PC-9 (cell line): ENCODE measurements at regions of chr2 and their contacts with region 1.

Region 1: GRCh38 chr2:130372055-130372832 is 16.4 kb downstream of the PTPN18 start:
- DNase-seq: peak; percentile 70 to 93
- H3K4me3 ChIP-seq: peak overlapping the region; percentile 94
- H3K27ac ChIP-seq: no peak overlapping the region
- H3K4me1 ChIP-seq: 0 out of 2 replicates have a peak, but pooled peaks cover 9% of the 10 kb centered on the region
- H3K27me3 ChIP-seq: no peaks in the 10 kb centered on the region
- CTCF ChIP-seq: peak; percentile 91

Region 2: DNA sequence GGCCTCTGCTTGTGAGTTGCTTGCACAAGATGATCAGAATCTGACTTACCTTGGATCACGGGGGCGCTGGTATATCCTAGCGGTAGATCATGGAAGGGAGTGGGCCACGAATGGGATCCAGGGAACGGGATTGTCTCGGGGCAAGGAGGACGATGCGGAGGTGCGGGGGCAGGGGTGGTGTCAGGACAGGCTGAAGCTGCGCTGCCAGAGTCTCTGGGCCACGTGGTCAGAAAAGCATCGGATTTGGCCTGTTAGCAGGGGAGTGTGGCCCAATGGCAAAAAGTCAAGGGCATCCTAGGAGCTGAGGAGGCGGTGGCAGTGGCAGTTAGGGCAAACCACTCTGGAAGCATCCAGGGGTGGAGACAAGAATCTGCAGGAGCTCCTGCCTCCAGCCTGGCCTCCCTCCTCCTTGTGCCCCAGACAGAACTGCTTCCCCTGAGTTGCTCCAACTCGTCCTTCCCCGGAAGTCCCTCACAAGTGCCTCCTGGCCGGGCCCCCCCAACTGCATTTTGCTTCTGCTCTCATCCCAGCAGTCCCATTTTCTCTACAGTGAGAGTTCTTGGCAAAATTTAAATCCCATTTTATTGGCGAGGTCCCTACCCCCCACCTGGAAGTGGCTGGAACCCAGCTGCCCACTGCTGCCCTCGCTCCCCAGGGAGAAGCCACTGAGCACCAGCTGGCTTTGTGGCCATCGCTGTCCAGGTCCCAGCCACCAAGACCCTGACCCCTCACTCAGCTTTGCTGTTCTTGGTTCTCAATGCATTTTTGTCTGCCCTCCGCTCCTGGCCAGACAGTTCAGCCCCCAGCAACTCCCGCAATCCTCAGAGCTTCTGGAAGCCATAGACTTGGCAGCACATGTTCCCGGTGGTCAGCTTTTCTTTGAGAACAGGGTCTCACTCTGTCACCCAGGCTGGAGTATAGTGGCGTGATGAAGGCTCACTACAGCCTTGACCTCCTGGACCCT is 221.8 kb before region 1 on chr2:
- CTCF ChIA-PET with region 1: no interaction called
- POLR2A ChIA-PET with region 1: no interaction called
- intact Hi-C with region 1: no loop called
- DNase-seq: no peak
- H3K4me3 ChIP-seq: no peak overlapping the region
- H3K27ac ChIP-seq: no peak overlapping the region
- H3K4me1 ChIP-seq: no peaks in the 10 kb centered on the region
- H3K27me3 ChIP-seq: no peaks in the 10 kb centered on the region
- CTCF ChIP-seq: no peak

Region 3: DNA sequence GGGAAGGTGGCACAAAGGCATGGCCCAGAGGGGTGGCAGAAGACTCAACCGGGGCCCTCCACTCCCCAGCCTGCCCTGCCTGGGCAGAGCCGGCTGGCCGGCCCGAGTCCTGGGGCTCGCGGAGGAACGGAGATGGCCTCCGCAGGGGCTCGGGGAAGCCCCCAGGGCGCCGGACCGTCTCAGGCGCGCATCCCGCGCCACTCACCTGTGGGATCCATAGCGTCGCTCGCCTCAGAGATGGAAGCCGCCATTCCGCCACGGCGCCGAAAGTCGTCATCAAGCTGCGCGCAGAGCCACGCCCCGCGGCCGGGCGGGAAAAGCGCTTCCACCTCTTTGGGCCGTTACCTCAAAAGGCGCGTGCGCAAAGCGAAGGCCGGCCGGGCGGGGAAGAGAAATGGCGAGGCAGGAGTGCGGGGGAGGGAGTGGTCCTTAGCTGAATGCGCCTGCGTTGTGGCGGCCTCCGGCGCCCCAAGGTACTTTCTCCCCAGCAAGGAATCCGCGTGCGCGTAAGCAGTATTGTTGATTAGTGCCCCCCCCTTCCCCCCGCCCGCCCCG is 190.8 kb before region 1 on chr2 and contains the start of gene SMPD4:
- CTCF ChIA-PET with region 1: no interaction called
- POLR2A ChIA-PET with region 1: no interaction called
- intact Hi-C with region 1: no loop called
- DNase-seq: peak; percentile 87 to 97
- H3K4me3 ChIP-seq: peak within 1 kb of the TSS; percentile 79
- H3K27ac ChIP-seq: peak within 1 kb of the TSS; percentile 32; the same call in 1 of the 2 replicates
- H3K4me1 ChIP-seq: 0 out of 2 replicates have a peak, but pooled peaks cover 4% of the 10 kb centered on the region
- H3K27me3 ChIP-seq: no peaks in the 10 kb centered on the region
- CTCF ChIP-seq: no peak
- total RNA-seq, gene SMPD4: 77.9 and 84.1 TPM in 2 replicates

Region 4: DNA sequence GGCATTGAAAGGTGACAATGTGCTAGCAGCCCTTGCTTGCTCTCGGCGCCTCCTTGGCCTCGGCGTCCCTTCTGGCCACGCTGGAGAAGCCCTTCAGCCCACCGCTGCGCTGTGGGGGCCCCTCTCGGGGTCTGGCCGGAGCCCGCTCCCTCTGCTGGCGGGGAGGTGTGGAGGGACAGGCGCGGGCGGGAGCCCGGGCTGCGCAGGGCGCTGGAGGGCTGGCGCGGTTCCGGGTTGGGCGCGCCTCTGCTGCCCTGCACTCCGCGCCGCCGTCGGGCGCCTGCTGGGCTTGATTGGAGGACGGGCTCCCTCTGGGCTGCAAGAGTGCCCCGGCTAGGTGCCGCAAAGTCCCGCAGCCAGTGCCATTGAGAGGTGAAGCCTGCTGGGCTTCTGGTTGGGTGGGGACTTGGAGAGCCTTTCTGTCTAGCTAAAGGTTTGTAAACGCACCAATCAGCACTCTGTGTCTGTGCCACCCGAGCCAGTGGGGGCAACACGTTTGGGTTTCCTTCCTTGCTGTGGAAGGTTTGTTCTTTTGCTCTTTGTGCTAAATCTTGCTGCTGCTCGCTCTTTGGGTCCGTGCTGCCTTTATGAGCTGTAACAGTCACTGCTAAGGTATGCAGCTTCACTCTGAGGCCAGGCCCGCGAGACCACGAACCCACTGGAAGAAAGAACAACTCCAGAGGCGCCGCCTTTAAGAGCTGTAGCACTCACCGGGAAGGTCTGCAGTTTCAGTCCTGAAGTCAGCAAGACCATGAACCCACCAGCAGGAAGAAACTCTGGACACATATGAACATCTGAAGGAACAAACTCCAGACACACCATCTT is 44.3 kb before region 1 on chr2:
- CTCF ChIA-PET with region 1: no interaction called
- POLR2A ChIA-PET with region 1: no interaction called
- intact Hi-C with region 1: no loop called
- DNase-seq: peak in 1 of 2 experiments; percentile 26
- H3K4me3 ChIP-seq: no peak overlapping the region
- H3K27ac ChIP-seq: no peak overlapping the region
- H3K4me1 ChIP-seq: no peaks in the 10 kb centered on the region
- H3K27me3 ChIP-seq: peaks cover 68% of the 10 kb centered on the region
- CTCF ChIP-seq: no peak

Region 5: GRCh38 chr2:130355578-130356431 is 16.4 kb before region 1 on chr2 and contains the start of gene PTPN18:
- CTCF ChIA-PET with region 1: no interaction called
- POLR2A ChIA-PET with region 1: interaction called, 8 read pairs
- intact Hi-C with region 1: loop called (anchors 1 kb)
- DNase-seq: peak; percentile 75 to 87
- H3K4me3 ChIP-seq: peak within 1 kb of the TSS; percentile 88
- H3K27ac ChIP-seq: no peak within 1 kb of the TSS
- H3K4me1 ChIP-seq: peaks cover 16% of the 10 kb centered on the region
- H3K27me3 ChIP-seq: no peaks in the 10 kb centered on the region
- CTCF ChIP-seq: peak; percentile 42; the same call in 1 of the 2 replicates
- total RNA-seq, gene PTPN18: 54.5 and 55.9 TPM in 2 replicates